Heart right ventricle (tissue), 16 donors: ENCODE measurements at regions of chr4 and their contacts with region 1.

Region 1: GRCh38 chr4:138680989-138681604 is 334.5 kb upstream of the NOCT start:
- DNase-seq: peak; percentile 63 to 81
- ATAC-seq: peak; percentile 61 to 86 (median 71)
- H3K4me3 ChIP-seq: no peak overlapping the region
- H3K27ac ChIP-seq: no peak overlapping the region
- H3K4me1 ChIP-seq: peaks cover 0 to 19% (median 4%) of the 10 kb centered on the region in 9 donors
- H3K27me3 ChIP-seq: peaks cover 0 to 10% (median 0%) of the 10 kb centered on the region in 7 donors
- CTCF ChIP-seq: peak; percentile 91 to 95 (median 94)

Region 2: GRCh38 chr4:137819964-137820383 is 861.1 kb before region 1 on chr4:
- intact Hi-C with region 1: loop called in 1 of 10 experiments (anchors 10 kb)
- DNase-seq: no peak
- ATAC-seq: peak in 1 of 8 donors; percentile 53
- H3K4me3 ChIP-seq: no peak overlapping the region
- H3K27ac ChIP-seq: no peak overlapping the region
- H3K4me1 ChIP-seq: no peaks in the 10 kb centered on the region
- H3K27me3 ChIP-seq: no peaks in the 10 kb centered on the region
- CTCF ChIP-seq: peak in 6 of 9 donors; percentile 33 to 47 (median 46)

Region 3: GRCh38 chr4:138090150-138090917 is 590.8 kb before region 1 on chr4:
- intact Hi-C with region 1: loop called in 7 of 10 experiments (anchors 2 to 10 kb)
- DNase-seq: peak; percentile 14 to 61
- ATAC-seq: peak; percentile 65 to 85 (median 80)
- H3K4me3 ChIP-seq: peak overlapping the region in 4 of 10 donors; percentile 24 to 26 (median 25)
- H3K27ac ChIP-seq: no peak overlapping the region
- H3K4me1 ChIP-seq: peaks cover 0 to 8% (median 0%) of the 10 kb centered on the region in 9 donors
- H3K27me3 ChIP-seq: no peaks in the 10 kb centered on the region
- CTCF ChIP-seq: peak; percentile 73 to 85 (median 85)

Region 4: GRCh38 chr4:138199568-138200235 is 481.4 kb before region 1 on chr4:
- intact Hi-C with region 1: loop called in 1 of 10 experiments (anchors 5 kb)
- DNase-seq: no peak
- ATAC-seq: peak in 1 of 8 donors; percentile 50
- H3K4me3 ChIP-seq: no peak overlapping the region
- H3K27ac ChIP-seq: peak overlapping the region in 2 of 10 donors; percentile 1 to 7
- H3K4me1 ChIP-seq: peaks cover 0 to 7% (median 0%) of the 10 kb centered on the region in 9 donors
- H3K27me3 ChIP-seq: no peaks in the 10 kb centered on the region
- CTCF ChIP-seq: no peak

Region 5: GRCh38 chr4:138870737-138871554 is 189.8 kb after region 1 on chr4:
- intact Hi-C with region 1: loop called in 7 of 10 experiments (anchors 2 to 10 kb)
- DNase-seq: peak in 1 of 2 donors; percentile 58
- ATAC-seq: peak in 7 of 8 donors; percentile 64 to 76 (median 69)
- H3K4me3 ChIP-seq: no peak overlapping the region
- H3K27ac ChIP-seq: no peak overlapping the region
- H3K4me1 ChIP-seq: peaks cover 0 to 7% (median 0%) of the 10 kb centered on the region in 9 donors
- H3K27me3 ChIP-seq: peaks cover 0 to 22% (median 8%) of the 10 kb centered on the region in 7 donors
- CTCF ChIP-seq: peak; percentile 66 to 88 (median 87)